A549 (cell line): ENCODE measurements at regions of chr10 and their contacts with region 1.

Region 1: DNA sequence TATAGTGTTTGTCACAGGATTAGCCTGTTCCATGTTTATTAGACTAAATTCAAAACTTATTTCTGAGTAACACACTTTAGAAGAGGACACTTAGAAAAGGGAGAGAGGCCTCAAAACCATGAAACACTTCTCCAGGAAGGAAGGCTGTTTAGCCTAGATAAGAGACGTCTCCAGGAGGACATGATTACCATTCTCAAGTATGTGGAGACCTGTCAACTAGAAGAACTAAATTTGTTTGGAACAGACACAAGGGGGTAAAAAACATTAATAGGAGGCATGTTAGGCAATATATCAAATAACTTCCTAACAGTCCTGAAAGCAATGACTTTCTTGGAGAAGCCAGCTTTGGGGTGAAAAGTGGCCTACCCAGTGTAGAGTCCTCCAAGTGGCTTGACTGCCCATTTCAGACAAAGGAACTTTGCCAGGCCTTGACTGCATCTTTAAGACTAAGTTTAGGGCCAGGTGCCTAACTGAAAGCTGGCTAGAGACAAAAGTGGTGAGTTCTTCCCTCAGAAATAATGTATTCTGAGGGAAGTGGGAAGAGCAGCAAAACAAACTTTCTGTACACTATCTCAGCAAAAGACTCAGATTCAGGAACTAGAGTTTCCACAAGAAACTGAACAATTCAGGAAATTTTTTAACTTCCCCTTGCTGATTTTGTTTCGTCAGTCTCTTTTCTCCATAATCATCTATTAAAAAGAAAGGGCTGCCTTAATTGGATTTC is 11.8 kb downstream of the NCOA4 start:
- DNase-seq: no peak
- ATAC-seq: no peak
- H3K4me3 ChIP-seq: no peak overlapping the region
- H3K27ac ChIP-seq: no peak overlapping the region
- H3K4me1 ChIP-seq: peaks cover 44% of the 10 kb centered on the region
- CTCF ChIP-seq: no peak
- EP300 ChIP-seq: no peak
- POLR2A ChIP-seq: no peak
- RAD21 ChIP-seq: no peak

Region 2: DNA sequence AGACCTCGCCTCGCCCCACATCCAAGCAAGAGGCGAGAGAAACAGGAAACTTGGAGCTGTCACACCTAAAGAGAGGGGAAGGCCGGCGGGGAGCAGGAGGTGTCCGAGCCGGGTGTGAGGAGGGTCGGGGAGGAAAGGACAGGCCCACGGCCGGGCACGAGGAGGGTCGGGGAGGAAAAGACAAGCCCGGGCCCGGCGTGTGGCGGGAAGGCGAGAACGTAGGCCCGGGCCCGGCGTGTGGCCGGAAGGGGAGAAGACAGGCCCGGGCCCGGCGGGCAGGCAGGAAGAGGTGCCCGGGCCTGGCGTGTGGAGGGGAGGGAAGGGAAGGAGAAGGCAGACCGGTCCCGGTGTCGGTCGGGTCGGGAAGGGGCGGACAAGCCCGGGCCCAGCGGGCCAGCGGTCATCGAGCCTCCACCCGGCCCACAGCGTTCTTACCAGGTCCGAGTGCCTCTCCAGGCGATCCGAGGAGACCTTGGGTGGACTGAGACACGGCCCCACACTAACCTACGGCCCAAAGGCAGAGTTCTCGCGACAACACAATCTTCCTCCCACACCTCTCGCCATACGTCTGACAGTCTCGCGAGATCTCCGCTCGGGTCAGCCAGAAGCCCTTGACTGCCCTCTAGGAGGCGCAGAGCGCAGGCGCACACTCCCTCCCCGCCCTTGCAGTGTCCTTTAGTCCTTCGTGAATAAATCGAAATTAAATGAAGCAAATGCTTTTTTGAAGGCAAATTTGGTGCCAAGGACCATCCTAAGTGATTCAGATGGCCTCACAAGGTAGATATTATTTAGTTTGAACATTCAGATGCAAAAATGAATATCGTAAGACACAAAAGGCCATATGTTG is 11.7 kb after region 1 on chr10 and contains the start of gene NCOA4:
- CTCF ChIA-PET with region 1: interaction called, 16 read pairs
- POLR2A ChIA-PET with region 1: no interaction called
- DNase-seq: peak; percentile 96 to 98
- ATAC-seq: peak; percentile 96 to 99
- H3K4me3 ChIP-seq: peak within 1 kb of the TSS; percentile 84
- H3K27ac ChIP-seq: peak within 1 kb of the TSS; percentile 89 to 92
- H3K4me1 ChIP-seq: peaks cover 29% of the 10 kb centered on the region
- CTCF ChIP-seq: peak; percentile 58
- EP300 ChIP-seq: no peak
- POLR2A ChIP-seq: peak; percentile 80
- RAD21 ChIP-seq: peak; percentile 26 to 28; a peak in 2 of 5 replicates
- polyA plus RNA-seq, gene NCOA4: 112 and 119 TPM in 2 replicates

Region 3: DNA sequence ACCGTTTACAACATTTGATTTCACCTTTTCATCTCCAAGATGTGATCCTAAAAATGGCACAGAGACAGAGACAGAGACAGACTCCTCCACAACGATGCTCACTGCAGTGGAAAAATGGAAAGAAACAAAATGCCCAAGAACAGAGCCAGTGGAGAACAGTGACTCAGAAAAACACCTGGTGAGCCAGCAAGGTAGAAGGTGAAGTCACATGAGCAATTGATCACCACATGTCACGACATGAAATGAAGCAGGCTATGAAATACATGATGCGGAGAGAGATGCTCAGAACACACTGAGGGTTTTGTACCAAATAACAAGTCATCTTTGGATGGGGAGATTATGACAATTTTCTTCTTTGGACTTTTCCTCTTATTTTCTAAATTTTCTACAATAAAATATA is 23.9 kb after region 1 on chr10:
- CTCF ChIA-PET with region 1: no interaction called
- POLR2A ChIA-PET with region 1: no interaction called
- DNase-seq: no peak
- ATAC-seq: no peak
- H3K4me3 ChIP-seq: no peak overlapping the region
- H3K27ac ChIP-seq: no peak overlapping the region
- H3K4me1 ChIP-seq: no peaks in the 10 kb centered on the region
- CTCF ChIP-seq: no peak
- EP300 ChIP-seq: no peak
- POLR2A ChIP-seq: no peak
- RAD21 ChIP-seq: no peak

Region 4: GRCh38 chr10:46514431-46514861 is 495.8 kb after region 1 on chr10:
- CTCF ChIA-PET with region 1: no interaction called
- POLR2A ChIA-PET with region 1: no interaction called
- DNase-seq: no peak
- ATAC-seq: no peak
- H3K4me3 ChIP-seq: no peak overlapping the region
- H3K27ac ChIP-seq: peak overlapping the region; percentile 82 to 86; a peak in 5 of 6 replicates
- H3K4me1 ChIP-seq: peaks cover 35% of the 10 kb centered on the region
- CTCF ChIP-seq: no peak
- EP300 ChIP-seq: no peak
- POLR2A ChIP-seq: no peak
- RAD21 ChIP-seq: no peak